ENCODE measurements at regions of chr16 and their contacts with region 1.

Region 1: GRCh38 chr16:10256784-10257641 is 74.8 kb upstream of the GRIN2A start:
- DNase-seq: peak; percentile 54
- H3K4me3 Mint-ChIP-seq: no peak overlapping the region
- H3K27ac Mint-ChIP-seq: no peak overlapping the region
- H3K4me1 Mint-ChIP-seq: peaks cover 5% of the 10 kb centered on the region
- H3K27me3 Mint-ChIP-seq: peaks cover 3% of the 10 kb centered on the region

Region 2: DNA sequence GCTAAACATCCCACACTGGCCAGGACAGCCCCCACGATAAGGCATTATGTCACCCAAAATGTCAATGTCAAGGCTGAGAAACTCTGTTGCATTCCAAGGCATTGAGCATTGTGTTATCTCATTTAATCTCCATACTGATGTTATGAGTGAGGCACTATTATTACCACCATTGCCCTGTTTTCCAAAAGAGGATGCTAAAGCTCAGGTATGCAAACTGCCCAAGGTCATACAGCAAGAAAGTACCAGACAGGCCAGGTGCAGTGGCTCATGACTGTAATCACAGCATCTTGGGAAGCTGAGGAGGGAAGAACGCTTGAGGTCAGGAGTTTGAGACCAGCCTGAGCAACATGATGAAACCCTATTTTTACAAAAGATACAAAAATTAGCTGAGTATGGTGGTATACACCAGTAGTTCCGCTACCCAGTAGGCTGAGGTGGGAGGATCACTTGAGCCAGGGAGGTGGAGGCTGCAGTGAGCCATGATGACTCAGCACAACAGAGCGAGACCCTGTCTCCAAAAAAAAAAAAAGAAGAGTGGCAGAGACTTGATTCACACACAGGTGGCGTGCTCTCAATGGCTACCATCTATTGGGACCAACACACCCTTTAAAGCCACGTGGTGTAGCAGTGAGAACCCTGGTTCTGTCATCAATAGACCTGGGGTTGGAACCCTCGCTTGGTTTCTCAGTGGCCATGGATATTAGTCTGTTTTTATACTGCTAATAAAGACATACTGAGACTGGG is 16.0 kb before region 1 on chr16:
- CTCF ChIA-PET with region 1: no interaction called
- POLR2A ChIA-PET with region 1: no interaction called
- intact Hi-C with region 1: no loop called
- DNase-seq: no peak
- H3K4me3 Mint-ChIP-seq: no peak overlapping the region
- H3K27ac Mint-ChIP-seq: no peak overlapping the region
- H3K4me1 Mint-ChIP-seq: no peaks in the 10 kb centered on the region
- H3K27me3 Mint-ChIP-seq: no peaks in the 10 kb centered on the region

Region 3: GRCh38 chr16:10282367-10282766 is 25.4 kb after region 1 on chr16:
- CTCF ChIA-PET with region 1: no interaction called
- POLR2A ChIA-PET with region 1: no interaction called
- intact Hi-C with region 1: no loop called
- DNase-seq: no peak
- H3K4me3 Mint-ChIP-seq: no peak overlapping the region
- H3K27ac Mint-ChIP-seq: no peak overlapping the region
- H3K4me1 Mint-ChIP-seq: no peaks in the 10 kb centered on the region
- H3K27me3 Mint-ChIP-seq: no peaks in the 10 kb centered on the region

Region 4: GRCh38 chr16:10314811-10315210 is 57.8 kb after region 1 on chr16:
- CTCF ChIA-PET with region 1: interaction called, 5 read pairs
- POLR2A ChIA-PET with region 1: no interaction called
- intact Hi-C with region 1: loop called (anchors 2 kb)
- DNase-seq: no peak
- H3K4me3 Mint-ChIP-seq: no peak overlapping the region
- H3K27ac Mint-ChIP-seq: no peak overlapping the region
- H3K4me1 Mint-ChIP-seq: peaks cover 10% of the 10 kb centered on the region
- H3K27me3 Mint-ChIP-seq: no peaks in the 10 kb centered on the region

Region 5: GRCh38 chr16:10501016-10501607 is 244.1 kb after region 1 on chr16:
- CTCF ChIA-PET with region 1: interaction called, 121 read pairs
- POLR2A ChIA-PET with region 1: no interaction called
- intact Hi-C with region 1: loop called (anchors 2 kb)
- DNase-seq: peak; percentile 33
- H3K4me3 Mint-ChIP-seq: no peak overlapping the region
- H3K27ac Mint-ChIP-seq: no peak overlapping the region
- H3K4me1 Mint-ChIP-seq: no peaks in the 10 kb centered on the region
- H3K27me3 Mint-ChIP-seq: no peaks in the 10 kb centered on the region

Region 6: GRCh38 chr16:10737068-10737625 is 480.1 kb after region 1 on chr16:
- CTCF ChIA-PET with region 1: interaction called, 4 read pairs
- POLR2A ChIA-PET with region 1: no interaction called
- intact Hi-C with region 1: loop called (anchors 2 kb)
- DNase-seq: peak; percentile 78
- H3K4me3 Mint-ChIP-seq: peak overlapping the region; percentile 46
- H3K27ac Mint-ChIP-seq: peak overlapping the region; percentile 38
- H3K4me1 Mint-ChIP-seq: peaks cover 26% of the 10 kb centered on the region
- H3K27me3 Mint-ChIP-seq: no peaks in the 10 kb centered on the region

Measured in activated CD4-positive, alpha-beta memory T cell treated with anti-CD3 and anti-CD28 coated beads for 36 hours (primary cell).